ENCODE measurements at regions of chr3 and their contacts with region 1.

Region 1: GRCh38 chr3:196195664-196196265 is 15.4 kb downstream of the ZDHHC19 start:
- DNase-seq: no peak
- ATAC-seq: no peak

Region 2: DNA sequence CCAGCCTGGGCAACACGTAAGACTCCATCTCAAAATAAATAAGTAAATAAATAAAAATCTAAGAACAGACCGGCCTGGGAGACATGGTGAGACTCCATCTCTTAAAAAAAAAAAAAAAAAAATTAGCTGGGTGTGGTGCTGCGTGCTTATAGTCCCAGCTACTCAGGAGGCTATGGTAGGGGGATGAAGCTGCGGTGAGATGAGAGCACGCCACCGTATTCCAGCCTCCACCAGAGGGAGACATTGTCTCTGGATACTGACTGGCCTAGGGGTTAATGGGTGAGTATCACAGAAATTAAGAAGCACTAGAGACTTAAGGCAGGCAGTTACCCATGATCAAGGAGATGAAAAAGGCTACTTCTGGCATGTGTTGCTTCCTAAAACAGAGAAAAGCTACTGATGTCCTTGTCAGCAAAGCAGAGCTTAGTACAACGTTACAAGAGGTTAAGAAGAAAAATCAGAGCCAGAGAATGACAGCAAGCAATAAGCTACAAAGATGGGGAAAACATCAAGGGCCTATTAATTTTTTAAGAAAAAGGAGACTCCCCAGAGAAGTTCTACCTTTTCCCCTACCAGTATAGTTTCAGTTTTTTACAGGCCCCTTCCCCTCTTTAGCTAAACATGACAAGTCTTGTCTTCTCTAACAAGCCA is 122.5 kb before region 1 on chr3:
- intact Hi-C with region 1: loop called (anchors 2 kb)
- DNase-seq: no peak
- ATAC-seq: peak; percentile 93

Region 3: DNA sequence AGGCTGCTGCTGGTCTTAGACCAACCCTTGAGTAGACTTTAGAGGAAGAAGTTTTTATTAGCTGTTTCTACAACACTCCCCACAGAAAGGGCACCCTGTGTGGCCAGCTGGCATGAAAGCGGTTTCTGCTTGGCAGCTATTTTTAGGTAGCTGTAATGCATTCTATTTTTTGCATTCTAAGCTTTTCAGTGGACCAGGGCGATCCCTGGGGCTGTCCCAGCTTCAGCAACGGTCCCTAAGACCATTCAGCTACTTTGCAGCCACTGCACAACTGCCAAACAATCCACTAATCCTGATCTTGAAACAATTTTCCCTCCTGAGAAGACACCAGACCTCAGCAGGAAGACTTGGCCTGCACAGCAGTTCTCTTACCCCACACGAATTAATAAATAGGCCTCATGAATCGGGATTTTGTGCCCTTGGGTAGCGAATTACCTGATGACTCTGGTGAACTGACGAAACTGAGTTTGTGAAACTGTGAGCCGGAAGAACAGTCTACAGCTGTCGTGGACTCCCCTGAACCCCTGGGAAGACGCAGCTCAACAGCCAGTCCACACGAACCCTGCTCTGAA is 99.3 kb before region 1 on chr3:
- intact Hi-C with region 1: no loop called
- DNase-seq: peak; percentile 70
- ATAC-seq: peak; percentile 97

Measured in Right ventricle myocardium superior (tissue), 1 donor.